ENCODE measurements at regions of chr21 and their contacts with region 1.

Region 1: GRCh38 chr21:42400525-42400924 is 3.2 kb upstream of the UBASH3A start:
- DNase-seq: no peak
- ATAC-seq: peak; percentile 34
- H3K4me3 Mint-ChIP-seq: peak overlapping the region; percentile 48
- H3K27ac Mint-ChIP-seq: peak overlapping the region; percentile 89
- H3K4me1 Mint-ChIP-seq: peaks cover 58% of the 10 kb centered on the region
- H3K27me3 Mint-ChIP-seq: no peaks in the 10 kb centered on the region

Region 2: GRCh38 chr21:41361786-41362604 is 1038.5 kb before region 1 on chr21 and contains the start of gene MX2:
- CTCF ChIA-PET with region 1: no interaction called
- POLR2A ChIA-PET with region 1: no interaction called
- intact Hi-C with region 1: loop called in 1 of 2 experiments (anchors 10 kb)
- DNase-seq: peak; percentile 87
- ATAC-seq: peak; percentile 79
- H3K4me3 Mint-ChIP-seq: peak within 1 kb of the TSS; percentile 77
- H3K27ac Mint-ChIP-seq: peak within 1 kb of the TSS; percentile 97
- H3K4me1 Mint-ChIP-seq: peaks cover 56% of the 10 kb centered on the region
- H3K27me3 Mint-ChIP-seq: no peaks in the 10 kb centered on the region
- total RNA-seq, gene MX2: 30.7 to 40.4 TPM

Region 3: GRCh38 chr21:42374864-42375492 is 25.5 kb before region 1 on chr21:
- CTCF ChIA-PET with region 1: interaction called, 5 read pairs
- POLR2A ChIA-PET with region 1: interaction called, 15 read pairs
- intact Hi-C with region 1: loop called in 1 of 2 experiments (anchors 5 kb)
- DNase-seq: peak; percentile 47
- ATAC-seq: peak; percentile 31
- H3K4me3 Mint-ChIP-seq: peak overlapping the region; percentile 57
- H3K27ac Mint-ChIP-seq: peak overlapping the region; percentile 92
- H3K4me1 Mint-ChIP-seq: peaks cover 50% of the 10 kb centered on the region
- H3K27me3 Mint-ChIP-seq: no peaks in the 10 kb centered on the region

Region 4: DNA sequence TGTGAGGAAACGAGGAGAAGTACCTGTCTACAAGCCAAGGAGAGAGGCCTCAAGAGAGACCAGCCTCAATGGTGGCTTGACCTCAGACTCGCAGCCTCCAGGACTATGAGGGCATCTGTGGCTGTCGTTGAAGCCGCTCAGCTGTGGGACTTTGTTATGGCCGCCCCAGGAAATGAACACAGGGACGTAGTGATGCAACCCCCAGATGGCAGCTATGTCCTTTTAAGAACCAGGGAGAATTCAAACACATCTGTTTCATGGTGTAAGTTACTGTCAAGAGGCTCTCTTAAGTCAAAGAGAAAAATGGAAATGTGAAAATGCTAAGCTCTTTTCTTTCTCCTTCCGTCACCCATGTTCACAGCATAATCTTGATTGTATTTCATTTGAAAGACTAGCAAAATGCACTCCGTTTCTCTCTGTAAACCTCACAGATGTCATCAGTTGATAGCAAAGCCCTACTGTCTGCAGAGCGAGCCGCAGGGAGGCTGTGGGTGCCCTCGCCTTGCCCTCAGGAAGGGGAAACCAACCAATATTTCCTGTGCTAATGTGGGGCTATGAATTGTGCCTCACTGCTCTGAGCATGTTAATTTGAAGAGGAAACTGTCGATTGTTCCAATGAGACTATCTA is 24.5 kb after region 1 on chr21:
- CTCF ChIA-PET with region 1: interaction called, 56 read pairs
- POLR2A ChIA-PET with region 1: interaction called, 15 read pairs
- intact Hi-C with region 1: no loop called
- DNase-seq: peak; percentile 78
- ATAC-seq: peak; percentile 55
- H3K4me3 Mint-ChIP-seq: peak overlapping the region; percentile 64
- H3K27ac Mint-ChIP-seq: peak overlapping the region; percentile 87
- H3K4me1 Mint-ChIP-seq: peaks cover 74% of the 10 kb centered on the region
- H3K27me3 Mint-ChIP-seq: no peaks in the 10 kb centered on the region

Region 5: DNA sequence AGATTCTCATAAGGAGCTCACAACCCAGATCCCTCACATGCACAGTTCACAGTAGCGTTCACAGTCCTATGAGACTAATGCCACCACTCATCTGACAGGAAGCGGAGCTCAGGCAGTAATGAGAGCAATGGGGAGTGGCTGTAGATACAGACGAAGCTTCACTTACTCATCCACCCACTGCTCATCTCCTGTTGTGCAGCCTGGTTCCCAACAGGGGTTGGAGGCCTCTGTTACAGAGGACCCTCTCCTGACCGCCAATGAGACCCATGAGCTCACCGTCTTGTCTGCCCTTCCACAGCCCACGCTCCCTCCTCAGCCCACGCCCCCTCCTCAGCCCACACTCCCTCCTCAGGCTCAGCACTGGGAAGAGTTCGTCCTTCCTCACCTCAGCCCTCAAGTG is 55.9 kb after region 1 on chr21:
- CTCF ChIA-PET with region 1: interaction called, 3 read pairs
- POLR2A ChIA-PET with region 1: no interaction called
- intact Hi-C with region 1: loop called in 1 of 2 experiments (anchors 5 kb)
- DNase-seq: peak; percentile 76
- ATAC-seq: peak; percentile 97
- H3K4me3 Mint-ChIP-seq: no peak overlapping the region
- H3K27ac Mint-ChIP-seq: peak overlapping the region; percentile 91
- H3K4me1 Mint-ChIP-seq: peaks cover 46% of the 10 kb centered on the region
- H3K27me3 Mint-ChIP-seq: no peaks in the 10 kb centered on the region

Region 6: GRCh38 chr21:43728467-43729390 is 1328.2 kb after region 1 on chr21:
- CTCF ChIA-PET with region 1: no interaction called
- POLR2A ChIA-PET with region 1: no interaction called
- intact Hi-C with region 1: loop called in 1 of 2 experiments (anchors 5 kb)
- DNase-seq: peak; percentile 90
- ATAC-seq: peak; percentile 87
- H3K4me3 Mint-ChIP-seq: peak overlapping the region; percentile 78
- H3K27ac Mint-ChIP-seq: peak overlapping the region; percentile 92
- H3K4me1 Mint-ChIP-seq: peaks cover 71% of the 10 kb centered on the region
- H3K27me3 Mint-ChIP-seq: no peaks in the 10 kb centered on the region